Activated T-helper 1 cell treated with anti-CD3 and anti-CD28 coated beads, Interleukin-12 subunit alpha, Interleukin-12 subunit beta, Interleukin-2, Interleukin-4 antibody, amounts not matched to agents 30 ng/mL and 10 ng/mL and 1 ng/mL, durations not matched to agents 14 hours and 24 hours and 36 hours (primary cell): ENCODE measurements at regions of chr2 and their contacts with region 1.

Region 1: DNA sequence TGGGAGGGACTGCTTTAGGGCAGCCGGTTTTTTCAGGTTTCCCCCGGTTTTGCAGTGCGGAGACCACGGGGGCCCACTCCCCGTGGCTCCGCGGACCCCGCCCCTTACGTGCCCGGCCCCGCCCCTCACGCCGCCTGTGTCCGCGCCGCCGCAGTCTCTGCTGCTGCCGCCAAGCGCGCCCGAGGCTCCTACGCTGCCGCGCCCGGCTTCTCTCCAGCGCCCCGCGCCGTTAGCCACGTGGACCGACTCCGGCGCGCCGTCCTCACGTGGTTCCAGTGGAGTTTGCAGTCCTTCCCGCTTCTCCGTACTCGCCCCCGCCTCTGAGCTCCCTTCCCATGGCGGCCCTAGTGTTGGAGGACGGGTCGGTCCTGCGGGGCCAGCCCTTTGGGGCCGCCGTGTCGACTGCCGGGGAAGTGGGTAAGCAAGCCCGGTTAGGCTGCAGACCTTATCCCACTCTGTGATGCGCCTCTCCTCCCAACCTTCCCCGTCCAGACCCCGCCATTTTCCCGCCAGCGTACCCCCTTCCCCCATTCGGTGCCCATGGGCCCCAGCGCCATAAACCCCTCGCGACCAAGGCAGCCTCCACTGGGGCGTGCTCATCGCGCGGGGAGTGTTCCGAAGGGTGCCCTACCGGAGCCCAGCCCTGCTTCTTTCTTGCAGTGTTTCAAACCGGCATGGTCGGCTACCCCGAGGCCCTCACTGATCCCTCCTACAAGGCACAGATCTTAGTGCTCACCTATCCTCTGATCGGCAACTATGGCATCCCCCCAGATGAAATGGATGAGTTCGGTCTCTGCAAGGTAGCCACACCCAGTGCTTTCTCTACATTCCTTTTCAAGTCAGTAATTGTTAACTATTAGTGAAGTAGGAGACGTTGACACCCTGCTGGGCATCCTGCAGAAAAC is at the start of gene CAD:
- DNase-seq: peak; percentile 85
- H3K4me3 Mint-ChIP-seq: peak within 1 kb of the TSS; percentile 98
- H3K27ac Mint-ChIP-seq: peak within 1 kb of the TSS; percentile 94
- H3K4me1 Mint-ChIP-seq: peaks cover 58% of the 10 kb centered on the region
- H3K27me3 Mint-ChIP-seq: no peaks in the 10 kb centered on the region
- total RNA-seq, gene CAD: 135 and 138 TPM in 2 replicates

Region 2: DNA sequence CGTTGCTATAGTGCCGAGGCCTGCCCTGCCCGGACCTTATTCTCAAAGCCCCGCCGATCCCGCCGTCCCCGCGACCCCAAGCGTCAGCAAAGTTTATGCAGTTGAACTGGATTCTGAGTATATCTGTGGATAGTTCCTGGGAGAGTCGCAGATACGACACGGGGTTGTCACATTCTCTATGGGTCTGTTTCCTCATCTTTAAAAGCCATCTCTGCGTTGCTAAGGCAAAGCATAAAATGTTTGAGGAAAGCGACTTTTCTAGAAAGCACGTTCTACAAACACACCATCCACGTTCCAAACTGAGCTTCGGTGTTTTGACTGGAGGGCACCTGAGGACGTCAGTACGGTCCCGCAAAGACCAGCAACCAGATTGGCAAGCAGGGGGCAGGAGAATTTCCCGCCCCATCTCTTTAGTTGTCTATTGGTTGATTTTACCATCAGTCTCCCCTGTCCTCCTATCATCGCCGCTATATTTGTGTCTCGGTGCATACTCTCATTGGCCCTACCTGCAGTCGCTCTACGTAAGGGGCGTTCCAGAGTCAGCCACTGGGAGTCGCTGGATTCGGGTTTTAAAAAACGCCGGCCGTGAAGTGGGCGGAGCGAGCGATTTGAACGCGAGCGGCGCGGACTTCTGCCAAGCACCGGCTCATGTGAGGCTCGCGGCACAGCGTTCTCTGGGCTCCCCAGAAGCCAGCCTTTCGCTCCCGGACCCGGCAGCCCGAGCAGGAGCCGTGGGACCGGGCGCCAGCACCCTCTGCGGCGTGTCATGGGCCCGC is 431.9 kb before region 1 on chr2 and contains the start of gene CENPA:
- intact Hi-C with region 1: loop called (anchors 5 kb)
- DNase-seq: peak; percentile 94
- H3K4me3 Mint-ChIP-seq: peak within 1 kb of the TSS; percentile 96
- H3K27ac Mint-ChIP-seq: peak within 1 kb of the TSS; percentile 89
- H3K4me1 Mint-ChIP-seq: peaks cover 33% of the 10 kb centered on the region
- H3K27me3 Mint-ChIP-seq: no peaks in the 10 kb centered on the region
- total RNA-seq, gene CENPA: 16.6 and 19.7 TPM in 2 replicates

Region 3: DNA sequence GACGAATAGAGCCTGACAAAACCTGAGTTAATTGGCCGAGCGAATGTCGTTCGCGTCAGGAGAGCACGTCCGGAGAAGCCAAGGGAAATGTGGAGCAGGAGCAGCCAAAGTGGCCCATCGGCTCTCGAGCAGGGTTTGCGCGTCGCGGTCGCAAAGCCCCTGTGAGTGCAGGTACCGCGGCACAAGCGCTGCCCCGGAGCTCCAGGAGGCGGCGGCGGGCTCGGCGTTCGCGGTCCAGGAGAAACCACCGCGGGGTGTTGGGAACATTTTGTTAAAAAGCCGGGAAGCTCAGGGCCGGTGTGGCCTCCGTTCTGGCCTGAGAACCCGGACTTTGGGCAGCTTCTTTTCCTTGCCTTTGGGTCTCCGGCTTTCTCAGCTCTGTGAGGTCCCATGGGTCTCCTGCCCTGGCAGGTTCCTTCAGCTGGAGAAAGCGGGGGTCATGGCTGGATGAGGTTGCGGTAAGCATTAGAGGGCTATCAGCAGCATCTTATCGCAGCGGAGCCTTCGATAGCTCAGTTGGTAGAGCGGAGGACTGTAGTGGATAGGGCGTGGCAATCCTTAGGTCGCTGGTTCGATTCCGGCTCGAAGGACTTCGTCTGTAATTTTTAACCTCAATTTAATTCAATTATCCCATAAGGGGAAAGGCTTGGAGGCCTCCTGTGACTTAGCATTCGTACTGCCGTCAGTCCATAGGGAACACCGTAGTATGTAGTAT is 167.0 kb before region 1 on chr2:
- intact Hi-C with region 1: loop called (anchors 1 kb)
- DNase-seq: peak; percentile 88
- H3K4me3 Mint-ChIP-seq: peak overlapping the region; percentile 96
- H3K27ac Mint-ChIP-seq: peak overlapping the region; percentile 99
- H3K4me1 Mint-ChIP-seq: peaks cover 36% of the 10 kb centered on the region
- H3K27me3 Mint-ChIP-seq: peaks cover 7% of the 10 kb centered on the region

Region 4: DNA sequence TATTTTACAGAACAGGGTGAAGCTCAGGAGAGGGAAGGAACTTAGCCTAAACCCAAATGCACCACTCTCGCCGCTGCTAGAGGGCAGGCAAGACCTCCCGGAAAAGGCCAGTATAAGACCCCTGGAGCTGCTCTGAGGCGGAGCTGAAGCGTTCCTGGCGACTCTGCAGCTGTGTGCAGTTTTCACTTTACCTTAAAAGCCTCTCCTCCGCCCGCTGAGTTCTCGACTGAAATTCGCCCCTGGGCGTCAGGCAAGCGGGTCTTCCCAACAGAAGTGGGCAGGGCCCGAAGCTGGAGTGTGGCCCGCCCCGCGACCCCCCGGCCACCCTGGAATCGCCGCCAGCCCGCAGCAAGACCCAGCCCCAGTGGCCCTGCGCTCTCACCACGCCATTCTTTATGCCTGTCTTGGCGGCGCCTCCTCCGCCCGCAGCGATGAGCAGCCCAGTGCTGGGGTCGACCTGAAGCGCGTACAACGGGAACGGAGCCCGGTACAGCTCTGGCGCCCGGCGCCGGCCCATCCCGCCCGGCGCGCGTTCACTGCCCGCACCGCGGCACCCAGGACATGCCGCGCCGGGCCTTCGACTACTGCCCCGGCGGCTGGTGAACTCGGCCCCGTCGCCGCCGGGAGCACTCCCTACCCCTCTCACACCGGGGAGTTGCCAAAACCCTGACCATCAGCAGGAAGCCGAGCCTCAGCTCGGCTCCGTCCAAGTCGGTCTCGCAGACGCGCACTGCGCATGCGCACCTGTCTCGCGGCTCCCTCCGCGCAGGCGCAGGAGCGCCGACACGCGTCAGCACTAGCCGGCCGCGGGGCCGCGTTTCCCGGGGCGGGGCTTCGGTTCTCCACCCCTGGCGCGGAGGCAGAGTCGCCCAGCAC is 83.3 kb before region 1 on chr2 and contains the start of gene PREB:
- intact Hi-C with region 1: loop called (anchors 1 kb)
- DNase-seq: peak; percentile 99
- H3K4me3 Mint-ChIP-seq: peak within 1 kb of the TSS; percentile 95
- H3K27ac Mint-ChIP-seq: peak within 1 kb of the TSS; percentile 98
- H3K4me1 Mint-ChIP-seq: peaks cover 12% of the 10 kb centered on the region
- H3K27me3 Mint-ChIP-seq: no peaks in the 10 kb centered on the region
- total RNA-seq, gene PREB: 95.9 and 97.1 TPM in 2 replicates

Region 5: GRCh38 chr2:27281855-27282559 is 64.5 kb after region 1 on chr2 and contains the start of gene TRIM54:
- intact Hi-C with region 1: loop called (anchors 1 kb)
- DNase-seq: no peak
- H3K4me3 Mint-ChIP-seq: no peak within 1 kb of the TSS
- H3K27ac Mint-ChIP-seq: no peak within 1 kb of the TSS
- H3K4me1 Mint-ChIP-seq: peaks cover 6% of the 10 kb centered on the region
- H3K27me3 Mint-ChIP-seq: peaks cover 33% of the 10 kb centered on the region
- total RNA-seq, gene TRIM54: 0.26 TPM in 1 of 2 replicates, not detected in the other

Region 6: DNA sequence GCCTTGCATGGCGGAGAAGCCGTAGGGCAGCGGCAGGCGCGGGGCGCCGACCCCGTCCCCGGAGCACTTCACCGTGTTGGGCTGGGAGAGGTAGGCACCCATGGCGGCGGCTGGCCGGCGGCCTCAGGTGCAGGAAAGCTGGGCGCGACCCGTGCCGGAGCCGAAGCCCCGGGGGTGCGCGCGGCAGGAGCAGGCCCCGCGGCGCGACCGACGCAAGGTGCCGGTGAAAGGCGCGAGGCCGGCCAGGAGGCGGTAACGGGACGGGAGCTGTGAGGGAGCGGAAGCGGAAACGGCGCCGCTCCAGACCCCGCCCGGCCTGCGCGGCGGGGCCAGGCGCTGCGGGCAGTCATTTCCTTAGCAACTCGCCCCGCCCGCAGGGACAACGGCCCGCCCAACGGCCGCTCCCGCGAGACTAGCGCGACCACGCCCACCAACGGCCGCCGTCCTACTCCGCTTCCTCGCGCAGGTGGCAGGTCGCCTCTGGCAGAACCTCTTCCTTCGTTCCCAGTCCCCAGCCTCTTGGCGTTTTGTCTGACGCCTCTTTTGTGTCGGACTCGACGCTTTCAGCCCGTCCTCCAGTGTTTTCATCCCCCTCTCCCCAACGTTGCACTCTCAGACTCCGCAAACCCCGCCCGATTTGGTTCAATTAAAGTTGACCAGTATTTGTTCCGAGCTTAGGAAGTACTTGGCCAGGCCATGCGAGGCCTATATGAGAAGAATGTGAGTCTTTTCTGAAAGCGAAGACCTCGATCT is 192.0 kb after region 1 on chr2 and contains the start of gene PPM1G:
- intact Hi-C with region 1: loop called (anchors 10 kb)
- DNase-seq: peak; percentile 95
- H3K4me3 Mint-ChIP-seq: peak within 1 kb of the TSS; percentile 90
- H3K27ac Mint-ChIP-seq: peak within 1 kb of the TSS; percentile 89
- H3K4me1 Mint-ChIP-seq: peaks cover 29% of the 10 kb centered on the region
- H3K27me3 Mint-ChIP-seq: peaks cover 2% of the 10 kb centered on the region
- total RNA-seq, gene PPM1G: 158 and 160 TPM in 2 replicates